GM13976 (cell line): ENCODE measurements at regions of chr3 and their contacts with region 1.

Region 1: GRCh38 chr3:183122257-183122932 is 23.1 kb upstream of the MCCC1 start:
- DNase-seq: peak; percentile 67
- CTCF ChIP-seq: peak; percentile 69

Region 2: DNA sequence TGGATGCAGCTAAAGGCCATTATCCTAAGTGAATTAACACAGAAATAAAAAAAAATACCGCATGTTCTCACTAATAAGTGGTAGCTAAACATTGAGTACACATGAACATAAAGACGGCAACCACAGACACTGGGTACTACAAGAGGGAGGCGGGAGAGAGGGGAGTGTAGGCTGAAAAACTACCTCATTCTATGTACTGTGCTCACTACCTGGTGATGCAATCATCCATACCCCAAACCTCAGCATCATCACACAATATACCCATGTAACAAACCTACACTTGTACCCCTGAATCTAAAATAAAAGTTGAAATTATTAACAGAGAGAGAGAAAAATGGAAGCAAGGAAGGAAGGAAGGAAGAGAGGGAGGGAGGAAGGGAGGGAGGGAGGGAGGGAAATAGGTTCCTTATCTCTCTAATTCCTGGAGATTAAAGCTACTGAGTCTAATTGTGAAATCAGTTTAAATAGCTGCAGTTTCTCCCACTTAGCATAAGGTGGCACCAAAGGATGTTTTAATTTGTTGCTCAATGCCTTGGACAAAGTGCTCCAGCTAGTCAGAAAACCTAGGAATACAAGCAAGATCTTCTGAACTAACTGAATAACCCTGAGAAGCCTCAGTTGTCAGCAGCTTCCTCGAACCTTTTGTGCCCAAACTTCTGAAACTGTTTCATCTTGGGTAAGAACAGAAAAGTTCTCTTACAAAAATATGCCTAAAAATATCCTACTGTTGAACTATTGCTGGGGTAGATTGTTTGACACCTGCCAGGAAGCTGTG is 408.5 kb before region 1 on chr3:
- in situ Hi-C with region 1: loop called (anchors 25 kb)
- DNase-seq: peak; percentile 58
- CTCF ChIP-seq: peak; percentile 74

Region 3: DNA sequence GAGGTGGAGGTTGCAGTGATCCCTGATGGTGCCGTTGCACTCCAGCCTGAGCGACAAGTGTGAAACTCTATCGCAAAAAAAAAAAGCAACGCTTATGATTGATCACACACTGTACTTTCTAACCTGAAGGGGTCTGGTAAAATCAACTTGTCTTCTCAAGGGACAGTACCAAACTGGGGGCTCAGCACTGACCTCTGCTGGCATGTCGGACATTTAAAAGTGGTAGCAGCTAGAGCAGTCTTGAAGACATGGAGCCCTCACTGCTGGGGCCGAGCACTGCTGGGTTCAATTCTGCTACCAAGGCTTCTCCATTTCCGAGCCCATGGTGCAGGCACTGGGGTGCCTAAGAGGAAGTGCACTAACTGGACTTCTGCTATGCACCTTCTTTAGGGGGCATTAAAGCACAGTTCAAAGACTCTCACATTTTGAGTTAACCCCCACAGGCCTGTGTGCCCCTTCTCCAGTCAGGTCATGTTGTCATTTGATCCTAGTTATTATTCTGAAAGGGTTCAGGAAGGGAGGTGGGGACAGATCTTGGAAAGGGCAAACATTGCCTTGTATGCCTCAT is 66.6 kb after region 1 on chr3:
- in situ Hi-C with region 1: loop called (anchors 10 kb)
- DNase-seq: peak; percentile 60
- CTCF ChIP-seq: peak; percentile 34

Region 4: DNA sequence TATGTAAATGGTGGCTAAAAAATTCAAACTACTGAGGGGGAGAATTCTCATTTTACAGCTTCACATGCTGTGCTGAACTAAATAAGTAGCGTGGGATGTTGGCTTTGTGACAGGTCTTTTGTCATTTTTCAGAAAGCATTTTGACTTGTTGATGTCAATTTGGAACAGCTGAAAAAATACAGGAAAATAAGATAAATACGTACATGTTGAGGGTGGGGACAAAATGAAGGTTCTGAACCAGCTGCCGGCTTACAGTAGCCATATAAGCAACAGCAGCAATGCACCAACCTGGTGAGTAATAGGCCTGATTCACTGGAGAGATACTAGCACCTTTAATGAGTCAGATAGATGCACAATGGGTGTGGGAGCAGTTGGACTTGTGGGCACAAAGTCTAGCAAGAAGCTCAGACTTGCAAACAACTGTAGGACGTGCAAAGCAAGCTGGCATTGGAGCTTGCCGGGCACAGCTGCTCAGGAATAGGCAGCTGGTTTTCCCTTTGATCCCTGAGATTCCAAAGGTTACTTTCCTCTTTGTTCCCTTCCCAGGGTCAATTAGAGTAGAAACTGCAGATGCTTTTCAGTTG is 143.5 kb after region 1 on chr3:
- in situ Hi-C with region 1: no loop called
- DNase-seq: no peak
- CTCF ChIP-seq: no peak